Posterior cingulate gyrus (tissue), 11 donors: ENCODE measurements at regions of chr12 and their contacts with region 1.

Region 1: GRCh38 chr12:54398995-54399793 is 14.7 kb upstream of the ZNF385A start:
- DNase-seq: peak; percentile 69 to 97 (median 92)

Region 2: GRCh38 chr12:52906774-52907486 is 1492.3 kb before region 1 on chr12:
- intact Hi-C with region 1: no loop called
- DNase-seq: peak in 2 of 10 donors; percentile 41 to 73

Region 3: DNA sequence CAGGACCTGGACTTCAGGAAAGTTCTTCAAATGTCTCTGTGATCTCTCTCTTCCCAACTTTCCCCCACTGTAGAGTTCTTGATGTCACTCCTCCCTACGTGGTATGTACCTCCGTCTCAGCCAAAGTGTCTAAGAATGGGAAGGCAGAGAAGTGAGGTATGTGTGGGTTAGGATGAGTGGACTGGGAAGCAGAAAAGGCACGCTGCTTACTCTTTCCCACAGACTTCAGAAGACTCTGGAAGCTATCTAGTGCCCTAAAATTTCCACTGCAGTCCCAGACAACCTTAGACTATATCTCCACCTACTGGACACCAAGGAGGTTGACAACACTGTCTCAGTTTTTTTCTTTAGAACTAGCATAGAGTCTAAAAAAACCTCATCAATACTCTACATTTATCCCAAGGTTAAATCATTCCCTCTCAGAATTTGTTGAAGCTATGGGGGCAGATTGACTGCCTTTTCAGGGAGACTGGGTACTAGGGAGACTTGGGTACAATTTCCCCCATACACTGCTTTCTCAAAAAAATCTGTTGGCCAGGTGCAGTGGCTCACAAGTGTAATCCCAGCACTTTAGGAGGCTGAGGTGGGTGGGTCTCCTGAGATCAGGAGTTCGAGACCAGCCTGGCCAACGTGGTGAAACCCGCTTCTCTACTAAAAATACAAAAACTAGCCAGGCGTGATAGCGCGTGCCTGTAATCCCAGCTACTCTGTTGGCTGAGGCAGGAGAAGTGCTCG is 40.5 kb after region 1 on chr12:
- intact Hi-C with region 1: loop called (anchors 1 kb)
- DNase-seq: peak in 1 of 10 donors; percentile 31